Cardiac septum (tissue), 1 donor: ENCODE measurements at regions of chr1 and their contacts with region 1.

Region 1: DNA sequence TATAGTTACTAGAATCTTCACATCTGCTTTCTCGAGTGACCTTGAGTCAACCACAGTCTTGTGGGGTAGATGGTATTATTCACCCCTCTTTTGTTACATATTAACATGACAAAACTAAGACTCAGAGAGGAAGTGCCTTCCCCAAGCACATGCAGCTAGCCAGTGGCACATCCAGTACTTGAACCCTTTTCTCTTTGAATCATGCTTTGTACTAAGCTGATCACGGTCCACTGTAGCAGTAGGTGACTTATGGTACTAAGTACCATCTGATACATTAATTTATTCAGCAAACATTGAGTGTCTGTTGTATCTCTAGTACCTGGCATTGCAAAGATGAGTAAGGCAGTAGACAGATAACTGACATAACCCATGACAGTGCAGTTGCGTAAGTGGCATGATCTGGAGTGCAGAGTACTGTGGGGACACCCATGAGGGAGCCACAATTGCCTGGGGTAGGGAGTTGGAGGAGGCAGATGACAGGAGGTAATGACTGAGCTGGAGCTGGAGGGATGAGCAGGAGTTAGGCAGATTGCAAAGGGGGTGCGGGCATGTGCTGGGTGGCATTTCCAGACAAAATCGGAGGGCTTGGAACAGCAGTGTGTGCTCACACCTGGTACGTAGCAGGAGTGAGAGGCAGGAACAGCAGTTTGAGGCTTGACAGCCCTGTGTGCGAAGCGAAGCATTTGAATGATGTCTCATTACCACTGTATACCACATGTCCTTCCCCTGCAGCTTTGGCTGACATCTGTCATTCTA is 29.8 kb downstream of the UCK2 start:
- DNase-seq: no peak

Region 2: DNA sequence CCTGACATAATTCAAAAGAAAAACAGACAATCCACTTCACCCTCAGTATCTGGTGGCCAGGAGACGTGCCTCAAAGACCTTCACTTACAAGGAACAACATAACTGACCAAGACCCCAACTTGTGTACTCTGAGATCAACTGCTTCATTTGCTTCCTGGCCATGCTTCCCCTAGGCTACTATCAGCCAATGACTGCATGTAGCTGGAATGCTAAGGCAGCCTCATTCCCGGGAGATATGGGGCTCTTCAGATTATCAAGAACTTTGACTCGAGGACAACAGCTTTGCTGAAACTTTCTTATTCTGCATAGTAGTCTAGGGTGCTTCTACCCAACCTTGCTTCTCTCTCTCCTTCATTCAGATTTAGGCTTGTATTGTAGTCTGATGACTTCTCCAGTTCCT is 41.5 kb before region 1 on chr1:
- intact Hi-C with region 1: loop called (anchors 5 kb)
- DNase-seq: no peak

Region 3: DNA sequence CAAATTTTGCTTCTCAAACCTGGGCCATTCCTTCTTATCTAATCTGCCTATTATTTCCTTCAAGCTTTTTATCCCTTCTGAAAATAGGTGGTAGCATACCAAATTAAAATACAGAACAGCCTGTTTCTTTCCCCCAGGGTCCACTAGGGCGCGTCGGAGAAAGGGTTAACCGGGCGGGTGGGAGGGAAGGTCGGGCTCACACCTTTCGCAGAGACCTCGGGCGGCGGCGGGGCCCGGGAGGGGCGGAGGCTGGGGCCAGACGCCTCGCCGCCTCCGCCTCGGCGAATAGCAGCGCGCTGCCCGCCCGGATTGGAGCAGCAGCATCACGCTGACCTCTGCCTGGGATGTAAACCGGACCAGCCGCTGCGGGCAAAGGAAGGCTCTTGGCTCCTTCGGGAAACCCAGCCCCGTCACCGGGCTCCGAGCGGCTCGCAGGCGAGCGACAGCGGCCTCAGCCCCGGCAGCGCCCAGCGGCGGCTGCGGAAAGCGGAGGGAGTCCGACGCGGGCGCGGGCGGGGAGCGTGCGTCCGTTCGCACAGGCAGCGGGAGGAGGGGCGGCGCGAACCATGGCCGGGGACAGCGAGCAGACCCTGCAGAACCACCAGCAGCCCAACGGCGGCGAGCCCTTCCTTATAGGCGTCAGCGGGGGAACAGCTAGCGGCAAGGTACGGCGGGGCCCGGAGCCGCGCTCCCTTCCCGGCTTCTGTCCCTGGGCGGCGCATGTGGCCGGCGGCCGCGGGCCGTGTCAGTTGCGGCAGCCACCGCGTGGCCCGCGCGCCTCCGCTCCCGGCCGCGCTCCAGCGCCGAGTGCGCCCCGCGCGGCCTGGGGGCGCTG is 29.7 kb before region 1 on chr1 and contains the start of gene UCK2:
- intact Hi-C with region 1: no loop called
- DNase-seq: peak; percentile 91
- total RNA-seq, gene UCK2: 32.0 TPM

Region 4: DNA sequence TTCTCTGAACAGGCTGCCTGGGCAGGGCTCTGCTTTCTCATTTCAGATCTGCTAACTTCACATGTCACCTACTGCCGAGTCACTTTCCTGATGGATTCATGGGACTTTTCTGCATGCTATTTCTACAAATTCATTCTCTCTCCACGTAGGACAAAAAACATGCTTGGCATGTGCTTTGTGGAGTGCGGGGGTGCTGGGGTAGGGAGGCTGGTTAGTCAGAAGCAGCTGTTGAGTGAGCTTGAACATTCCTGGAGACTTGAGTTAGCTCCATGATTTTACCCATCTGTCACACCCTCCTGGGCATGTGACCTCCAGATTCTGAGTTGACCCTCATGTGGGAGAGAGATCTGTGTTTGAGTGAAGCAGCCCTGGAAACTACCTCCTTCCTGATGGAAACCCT is 41.6 kb after region 1 on chr1:
- intact Hi-C with region 1: loop called (anchors 2 kb)
- DNase-seq: no peak